Sciatic nerve (tissue), 2 donors: ENCODE measurements at regions of chr6 and their contacts with region 1.

Region 1: DNA sequence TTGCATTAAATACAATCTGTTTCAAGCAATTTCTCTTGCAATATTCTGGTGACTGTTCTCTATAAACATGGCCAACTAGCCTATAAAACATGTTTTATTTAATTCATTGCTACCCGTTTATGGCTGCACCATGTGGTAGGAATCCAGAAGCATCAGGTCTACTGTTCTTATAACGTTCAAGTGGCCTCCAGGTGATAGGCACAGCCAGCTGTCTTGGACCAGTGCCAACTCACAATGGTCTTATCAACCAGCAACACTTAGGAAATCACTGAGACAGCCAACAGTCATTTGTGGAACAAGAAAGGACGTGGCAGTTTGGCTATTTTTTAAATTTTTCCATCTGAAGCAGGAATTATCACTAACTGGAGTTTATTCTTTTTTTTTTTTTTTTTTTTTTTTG is 193.6 kb downstream of the NKAIN2 start:
- DNase-seq: no peak
- ATAC-seq: no peak

Region 2: DNA sequence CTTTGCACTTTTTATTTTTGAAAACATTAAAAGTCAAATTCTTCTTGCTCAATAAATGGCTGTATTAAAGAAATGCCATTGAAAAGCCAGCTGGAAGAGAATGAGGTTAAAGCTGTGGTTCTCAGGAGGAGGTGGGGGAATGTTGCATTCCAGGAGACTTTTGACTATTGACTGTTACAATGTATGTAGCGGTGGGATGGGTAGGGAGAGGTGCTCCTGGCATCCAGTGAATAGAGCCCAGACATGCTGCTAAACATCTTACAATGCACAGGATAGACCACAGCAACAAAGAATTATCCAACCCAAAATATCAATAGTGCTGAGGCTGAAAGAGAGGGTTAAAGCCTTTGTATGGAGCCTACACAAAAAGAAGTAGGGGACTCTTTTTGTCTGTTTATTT is 102.3 kb after region 1 on chr6:
- intact Hi-C with region 1: loop called (anchors 5 kb)
- DNase-seq: no peak
- ATAC-seq: no peak